WTC11 (cell line): ENCODE measurements at regions of chr6 and their contacts with region 1.

Region 1: DNA sequence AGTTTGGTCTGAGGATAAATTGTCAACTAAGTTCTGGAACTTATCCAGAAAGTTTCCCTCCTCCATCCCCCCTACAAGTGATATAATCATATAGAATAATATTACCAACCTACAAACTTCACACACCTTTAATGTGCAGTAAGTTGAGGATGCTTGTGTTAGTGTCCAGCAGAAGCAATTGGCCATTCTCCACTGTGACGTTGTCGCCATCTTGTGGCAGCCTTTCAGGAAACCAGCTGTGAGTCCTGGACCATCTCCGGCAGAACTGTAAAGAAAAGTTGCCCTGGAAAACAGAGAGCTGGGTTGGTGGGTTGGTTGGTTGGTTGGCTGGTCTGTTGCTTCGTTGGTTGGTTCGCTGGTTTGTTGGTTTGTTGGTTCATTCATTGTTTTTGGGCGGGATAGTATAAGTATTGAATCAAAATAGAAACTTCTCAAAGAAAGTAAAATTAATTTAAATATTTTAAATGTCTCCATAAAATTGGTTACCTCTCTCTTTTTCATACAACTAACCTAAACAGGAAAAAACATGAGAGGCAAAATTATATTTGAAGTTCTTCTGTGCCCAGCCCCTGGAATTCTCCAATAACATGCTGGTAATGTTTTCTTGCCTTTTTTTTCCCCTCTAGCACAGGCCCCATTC is 127.5 kb downstream of the PKHD1 start:
- DNase-seq: peak; percentile 80
- ATAC-seq: peak; percentile 91
- H3K4me3 Mint-ChIP-seq: no peak overlapping the region
- H3K27ac Mint-ChIP-seq: no peak overlapping the region
- H3K4me1 Mint-ChIP-seq: no peaks in the 10 kb centered on the region; the same call in 1 of the 2 replicates
- H3K27me3 Mint-ChIP-seq: no peaks in the 10 kb centered on the region; the same call in 1 of the 2 replicates
- CTCF ChIP-seq: peak; percentile 61

Region 2: GRCh38 chr6:51855310-51856082 is 104.4 kb before region 1 on chr6:
- CTCF ChIA-PET with region 1: interaction called, 24 read pairs
- POLR2A ChIA-PET with region 1: no interaction called
- DNase-seq: peak; percentile 23
- ATAC-seq: peak; percentile 94
- H3K4me3 Mint-ChIP-seq: no peak overlapping the region
- H3K27ac Mint-ChIP-seq: peak overlapping the region; percentile 68; the same call in 1 of the 2 replicates
- H3K4me1 Mint-ChIP-seq: peaks cover 17% of the 10 kb centered on the region
- H3K27me3 Mint-ChIP-seq: no peaks in the 10 kb centered on the region; the same call in 1 of the 2 replicates
- CTCF ChIP-seq: peak; percentile 58

Region 3: DNA sequence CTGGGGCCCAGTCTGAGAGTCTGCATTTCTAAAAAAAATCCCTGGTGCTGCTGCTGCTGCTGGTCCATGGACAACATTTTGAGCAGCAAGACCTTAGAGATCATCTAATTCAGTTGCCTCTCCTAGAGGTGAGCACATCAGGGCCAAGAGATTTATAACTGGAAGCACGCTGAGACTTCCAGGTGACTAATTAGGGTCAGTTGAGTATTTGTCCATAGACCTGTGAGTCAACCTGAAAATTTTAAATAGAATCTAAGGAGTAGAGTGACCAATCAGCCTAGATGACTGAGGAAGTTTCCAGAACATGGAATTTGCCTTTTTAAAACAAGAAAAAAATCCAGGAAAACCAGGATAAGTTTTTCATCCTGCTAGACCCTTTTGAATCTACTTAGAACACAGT is 93.9 kb before region 1 on chr6:
- CTCF ChIA-PET with region 1: interaction called, 15 read pairs
- POLR2A ChIA-PET with region 1: no interaction called
- DNase-seq: no peak
- ATAC-seq: peak; percentile 61
- H3K4me3 Mint-ChIP-seq: no peak overlapping the region
- H3K27ac Mint-ChIP-seq: no peak overlapping the region
- H3K4me1 Mint-ChIP-seq: peaks cover 24% of the 10 kb centered on the region
- H3K27me3 Mint-ChIP-seq: no peaks in the 10 kb centered on the region
- CTCF ChIP-seq: no peak

Region 4: GRCh38 chr6:51934098-51934497 is 25.8 kb before region 1 on chr6:
- CTCF ChIA-PET with region 1: interaction called, 13 read pairs
- POLR2A ChIA-PET with region 1: no interaction called
- DNase-seq: peak; percentile 49
- ATAC-seq: peak; percentile 90
- H3K4me3 Mint-ChIP-seq: no peak overlapping the region
- H3K27ac Mint-ChIP-seq: no peak overlapping the region
- H3K4me1 Mint-ChIP-seq: peaks cover 12% of the 10 kb centered on the region
- H3K27me3 Mint-ChIP-seq: no peaks in the 10 kb centered on the region; the same call in none of the 2 replicates
- CTCF ChIP-seq: peak; percentile 50

Region 5: GRCh38 chr6:51949468-51949867 is 10.4 kb before region 1 on chr6:
- CTCF ChIA-PET with region 1: interaction called, 12 read pairs
- POLR2A ChIA-PET with region 1: no interaction called
- DNase-seq: no peak
- ATAC-seq: no peak
- H3K4me3 Mint-ChIP-seq: no peak overlapping the region
- H3K27ac Mint-ChIP-seq: no peak overlapping the region
- H3K4me1 Mint-ChIP-seq: peaks cover 2% of the 10 kb centered on the region
- H3K27me3 Mint-ChIP-seq: no peaks in the 10 kb centered on the region
- CTCF ChIP-seq: no peak

Region 6: GRCh38 chr6:52020945-52021570 is 61.2 kb after region 1 on chr6:
- CTCF ChIA-PET with region 1: interaction called, 13 read pairs
- POLR2A ChIA-PET with region 1: no interaction called
- DNase-seq: no peak
- ATAC-seq: no peak
- H3K4me3 Mint-ChIP-seq: no peak overlapping the region
- H3K27ac Mint-ChIP-seq: no peak overlapping the region
- H3K4me1 Mint-ChIP-seq: peaks cover 47% of the 10 kb centered on the region
- H3K27me3 Mint-ChIP-seq: no peaks in the 10 kb centered on the region
- CTCF ChIP-seq: peak; percentile 74

Region 7: DNA sequence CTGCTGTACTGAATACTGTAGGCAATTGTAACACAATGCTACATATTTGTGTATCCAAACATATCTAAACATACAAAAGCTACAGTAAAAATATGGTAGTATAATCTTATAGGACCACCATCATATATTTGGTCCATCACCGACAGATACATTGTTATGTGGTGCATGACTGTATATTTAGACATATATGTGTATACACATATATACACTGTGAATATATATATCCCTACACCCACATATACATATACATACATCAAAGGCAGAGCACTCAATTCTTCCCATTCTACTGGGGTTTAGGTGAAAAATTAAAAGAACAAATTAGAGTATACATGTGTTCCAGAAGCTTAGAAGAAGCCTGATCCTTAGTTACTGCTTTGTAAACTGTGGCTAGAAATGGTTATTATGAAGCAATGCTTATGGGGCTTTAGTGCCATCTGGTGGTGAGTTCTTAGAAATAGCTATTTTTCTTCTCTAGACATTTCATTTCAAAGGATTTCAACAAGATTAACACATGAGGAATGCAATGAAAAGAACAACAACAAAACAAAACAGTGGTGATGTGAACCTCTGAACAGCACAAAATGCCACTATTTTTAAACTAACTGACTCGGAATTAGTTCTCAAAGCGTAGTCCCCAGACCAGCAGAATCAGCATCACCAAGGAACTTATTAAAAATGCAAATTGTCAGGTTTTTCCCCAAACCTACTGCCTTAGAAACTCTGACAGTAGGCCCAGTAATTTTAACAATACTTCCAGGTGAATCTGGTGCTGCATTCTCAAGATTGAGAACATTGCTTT is 89.6 kb after region 1 on chr6:
- CTCF ChIA-PET with region 1: interaction called, 13 read pairs
- POLR2A ChIA-PET with region 1: no interaction called
- DNase-seq: no peak
- ATAC-seq: peak; percentile 50; the same call in 1 of the 2 replicates
- H3K4me3 Mint-ChIP-seq: no peak overlapping the region
- H3K27ac Mint-ChIP-seq: no peak overlapping the region
- H3K4me1 Mint-ChIP-seq: peaks cover 9% of the 10 kb centered on the region
- H3K27me3 Mint-ChIP-seq: no peaks in the 10 kb centered on the region
- CTCF ChIP-seq: peak; percentile 39